ENCODE measurements at regions of chr17 and their contacts with region 1.

Region 1: GRCh38 chr17:7296189-7296902 is 1.9 kb upstream of the YBX2 start:
- DNase-seq: peak; percentile 73
- H3K4me3 Mint-ChIP-seq: no peak overlapping the region
- H3K27ac Mint-ChIP-seq: no peak overlapping the region
- H3K4me1 Mint-ChIP-seq: peaks cover 17% of the 10 kb centered on the region
- H3K27me3 Mint-ChIP-seq: no peaks in the 10 kb centered on the region
- CTCF ChIP-seq: peak; percentile 91

Region 2: GRCh38 chr17:7219812-7220581 is 76.3 kb before region 1 on chr17 and contains the starts of genes ACADVL and DLG4:
- CTCF ChIA-PET with region 1: interaction called, 3 read pairs
- POLR2A ChIA-PET with region 1: interaction called, 8 read pairs
- intact Hi-C with region 1: loop called (anchors 1 kb)
- DNase-seq: peak; percentile 94
- H3K4me3 Mint-ChIP-seq: peak within 1 kb of the TSS; percentile 86
- H3K27ac Mint-ChIP-seq: peak within 1 kb of the TSS; percentile 96
- H3K4me1 Mint-ChIP-seq: peaks cover 37% of the 10 kb centered on the region
- H3K27me3 Mint-ChIP-seq: no peaks in the 10 kb centered on the region
- CTCF ChIP-seq: no peak
- total RNA-seq, gene ACADVL: 387 and 413 TPM in 2 replicates
- total RNA-seq, gene DLG4: 7.6 TPM in 2 replicates

Region 3: DNA sequence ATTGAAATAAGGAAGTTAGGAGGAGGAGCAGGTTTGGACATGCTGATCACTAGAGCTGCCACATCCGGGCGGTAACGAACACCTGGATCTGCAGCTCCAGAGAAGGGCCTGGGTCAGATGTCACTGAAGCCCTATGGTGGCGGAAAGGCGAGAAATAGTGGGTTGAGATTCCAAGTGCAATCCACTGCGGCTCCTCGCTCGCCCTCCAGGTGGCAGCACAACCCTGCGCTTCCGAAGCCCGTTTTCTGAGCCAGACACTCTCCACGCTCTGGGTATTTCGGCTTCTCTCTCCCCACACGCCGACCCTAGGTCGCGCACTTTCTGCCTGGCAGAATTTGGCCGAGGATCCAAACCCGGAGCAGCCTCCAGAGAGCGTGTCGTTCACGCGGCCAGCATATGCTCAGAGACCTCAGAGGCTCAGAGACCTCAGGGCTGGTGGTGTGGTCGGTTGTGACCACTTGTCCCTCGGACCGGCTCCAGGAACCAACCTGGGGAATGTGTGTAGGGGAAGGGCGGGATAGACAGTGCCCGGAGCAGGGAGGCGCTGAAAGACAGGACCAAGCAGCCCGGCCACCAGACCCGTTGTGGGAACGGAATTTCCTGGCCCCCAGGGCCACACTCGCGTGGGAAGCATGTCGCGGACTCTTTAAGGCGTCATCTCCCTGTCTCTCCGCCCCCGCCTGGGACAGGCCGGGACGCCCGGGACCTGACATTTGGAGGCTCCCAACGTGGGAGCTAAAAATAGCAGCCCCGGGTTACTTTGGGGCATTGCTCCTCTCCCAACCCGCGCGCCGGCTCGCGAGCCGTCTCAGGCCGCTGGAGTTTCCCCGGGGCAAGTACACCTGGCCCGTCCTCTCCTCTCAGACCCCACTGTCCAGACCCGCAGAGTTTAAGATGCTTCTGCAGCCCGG is 15.6 kb before region 1 on chr17:
- CTCF ChIA-PET with region 1: interaction called, 65 read pairs
- POLR2A ChIA-PET with region 1: interaction called, 37 read pairs
- intact Hi-C with region 1: loop called (anchors 1 kb)
- DNase-seq: peak; percentile 88
- H3K4me3 Mint-ChIP-seq: peak overlapping the region; percentile 72
- H3K27ac Mint-ChIP-seq: no peak overlapping the region
- H3K4me1 Mint-ChIP-seq: peaks cover 6% of the 10 kb centered on the region
- H3K27me3 Mint-ChIP-seq: no peaks in the 10 kb centered on the region
- CTCF ChIP-seq: peak; percentile 96

Region 4: GRCh38 chr17:7306911-7307686 is 10.8 kb after region 1 on chr17 and contains the start of gene EIF5A:
- CTCF ChIA-PET with region 1: interaction called, 15 read pairs
- POLR2A ChIA-PET with region 1: interaction called, 5 read pairs
- intact Hi-C with region 1: no loop called
- DNase-seq: peak; percentile 100
- H3K4me3 Mint-ChIP-seq: peak within 1 kb of the TSS; percentile 88
- H3K27ac Mint-ChIP-seq: peak within 1 kb of the TSS; percentile 90
- H3K4me1 Mint-ChIP-seq: peaks cover 24% of the 10 kb centered on the region
- H3K27me3 Mint-ChIP-seq: no peaks in the 10 kb centered on the region
- CTCF ChIP-seq: no peak
- total RNA-seq, gene EIF5A: 1,142 and 1,190 TPM in 2 replicates